ENCODE measurements at regions of chr6 and their contacts with region 1.

Region 1: GRCh38 chr6:126657561-126658175 is 317.8 kb downstream of the CENPW start:
- DNase-seq: peak; percentile 56
- H3K4me3 ChIP-seq: no peak overlapping the region
- H3K27ac ChIP-seq: no peak overlapping the region
- H3K4me1 ChIP-seq: no peaks in the 10 kb centered on the region
- H3K27me3 ChIP-seq: no peaks in the 10 kb centered on the region
- CTCF ChIP-seq: peak; percentile 36 to 41
- POLR2A ChIP-seq: no peak

Region 2: GRCh38 chr6:125995972-125996580 is 661.6 kb before region 1 on chr6:
- CTCF ChIA-PET with region 1: interaction called, 15 read pairs
- POLR2A ChIA-PET with region 1: no interaction called
- dilution Hi-C with region 1: no loop called
- intact Hi-C with region 1: loop called (anchors 1 kb)
- DNase-seq: peak; percentile 74
- H3K4me3 ChIP-seq: no peak overlapping the region
- H3K27ac ChIP-seq: no peak overlapping the region
- H3K4me1 ChIP-seq: no peaks in the 10 kb centered on the region
- H3K27me3 ChIP-seq: no peaks in the 10 kb centered on the region
- CTCF ChIP-seq: peak; percentile 84 to 97
- POLR2A ChIP-seq: no peak

Region 3: DNA sequence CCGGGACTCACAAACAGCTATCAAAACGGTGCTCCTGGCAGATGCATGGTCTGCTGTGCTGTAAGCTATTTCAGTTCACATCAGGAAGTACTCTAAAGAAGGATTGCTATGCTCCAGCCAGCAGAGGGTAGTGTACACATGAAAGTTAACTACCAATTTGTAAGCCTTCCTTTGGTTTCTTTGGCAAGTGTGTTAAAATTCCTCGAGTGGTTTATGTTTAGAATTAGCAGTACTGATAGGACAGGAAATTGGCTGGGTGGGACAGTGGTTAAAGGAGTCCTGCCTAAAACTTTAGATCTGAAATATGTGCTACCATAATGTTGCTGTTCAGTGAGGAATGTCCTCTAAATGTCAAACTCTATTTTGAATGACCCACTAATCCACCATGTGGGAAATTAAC is 624.0 kb before region 1 on chr6:
- CTCF ChIA-PET with region 1: interaction called, 24 read pairs
- POLR2A ChIA-PET with region 1: no interaction called
- dilution Hi-C with region 1: no loop called
- intact Hi-C with region 1: loop called (anchors 1 kb)
- DNase-seq: peak; percentile 78
- H3K4me3 ChIP-seq: no peak overlapping the region
- H3K27ac ChIP-seq: no peak overlapping the region
- H3K4me1 ChIP-seq: no peaks in the 10 kb centered on the region
- H3K27me3 ChIP-seq: no peaks in the 10 kb centered on the region
- CTCF ChIP-seq: peak; percentile 56 to 65
- POLR2A ChIP-seq: no peak

Region 4: DNA sequence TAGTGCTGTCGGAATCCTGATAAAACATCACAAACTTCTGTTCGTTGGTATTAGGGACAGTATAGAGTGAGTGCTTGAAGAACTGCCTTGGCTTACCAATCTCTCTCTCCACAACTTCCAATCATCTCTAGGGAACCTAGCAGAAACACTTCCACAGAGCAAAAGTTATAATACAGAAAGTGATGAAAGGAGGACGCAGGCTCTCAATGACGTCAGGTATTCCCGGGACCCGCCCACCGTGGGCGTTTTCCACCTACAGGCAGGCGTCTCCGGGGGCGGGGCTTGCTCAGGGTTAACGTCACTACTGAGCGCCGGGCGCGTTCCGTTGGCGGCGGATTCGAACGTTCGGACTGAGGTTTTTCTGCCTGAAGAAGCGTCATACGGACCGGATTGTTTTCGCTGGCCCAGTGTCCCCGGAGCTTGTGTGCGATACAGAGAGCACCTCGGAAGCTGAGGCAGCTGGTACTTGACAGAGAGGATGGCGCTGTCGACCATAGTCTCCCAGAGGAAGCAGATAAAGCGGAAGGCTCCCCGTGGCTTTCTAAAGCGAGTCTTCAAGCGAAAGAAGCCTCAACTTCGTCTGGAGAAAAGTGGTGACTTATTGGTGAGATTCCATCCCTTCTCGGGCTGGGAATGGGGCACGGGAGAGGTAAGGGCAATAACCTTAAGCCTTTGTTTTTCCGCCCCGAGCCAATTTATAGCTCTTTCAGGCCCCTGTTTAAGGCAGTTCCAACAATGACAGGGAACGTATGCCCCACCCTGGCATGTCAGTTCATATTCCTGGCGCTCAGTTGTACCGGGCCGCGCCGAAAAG is 317.7 kb before region 1 on chr6 and contains the start of gene CENPW:
- CTCF ChIA-PET with region 1: no interaction called
- POLR2A ChIA-PET with region 1: no interaction called
- dilution Hi-C with region 1: no loop called
- intact Hi-C with region 1: loop called (anchors 1 kb)
- DNase-seq: peak; percentile 92
- H3K4me3 ChIP-seq: peak within 1 kb of the TSS; percentile 62 to 99 (median 98)
- H3K27ac ChIP-seq: peak within 1 kb of the TSS; percentile 61
- H3K4me1 ChIP-seq: peaks cover 15% of the 10 kb centered on the region
- H3K27me3 ChIP-seq: peaks cover 0 to 2% of the 10 kb centered on the region in 2 experiments
- CTCF ChIP-seq: no peak
- POLR2A ChIP-seq: peak; percentile 56
- total RNA-seq, gene CENPW: 82.7 and 85.8 TPM in 2 replicates

Region 5: DNA sequence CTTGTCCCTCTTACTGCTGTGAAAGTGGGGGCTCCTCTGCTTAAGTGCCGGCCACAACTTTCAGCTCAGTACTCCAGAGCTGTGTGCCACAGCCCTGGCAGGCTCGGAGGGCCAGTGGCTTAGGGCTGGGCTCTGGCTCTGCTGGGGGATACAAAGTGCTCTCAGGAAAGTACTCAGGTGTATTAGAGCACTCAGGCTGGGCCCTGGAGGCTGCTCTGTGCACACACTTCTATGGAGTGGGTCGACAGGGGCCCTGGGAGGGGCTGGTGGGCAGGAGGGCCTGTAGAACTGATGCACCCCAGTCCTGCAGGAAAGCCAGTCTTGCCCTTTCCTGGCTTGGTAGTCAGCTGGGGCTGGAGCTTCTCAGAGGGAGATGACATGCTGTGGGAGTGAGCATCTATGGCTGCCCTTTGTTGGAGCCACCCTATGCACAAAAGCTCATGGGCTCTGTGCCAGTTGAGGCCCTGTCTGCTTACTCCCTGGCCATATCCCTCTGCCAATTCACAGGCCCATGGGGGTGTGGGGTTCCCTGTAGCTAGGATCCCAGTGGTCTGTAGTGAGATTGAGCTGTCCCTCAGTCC is 295.7 kb before region 1 on chr6:
- CTCF ChIA-PET with region 1: interaction called, 29 read pairs
- POLR2A ChIA-PET with region 1: no interaction called
- dilution Hi-C with region 1: no loop called
- intact Hi-C with region 1: loop called (anchors 2 kb)
- DNase-seq: no peak
- H3K4me3 ChIP-seq: no peak overlapping the region
- H3K27ac ChIP-seq: no peak overlapping the region
- H3K4me1 ChIP-seq: peaks cover 5% of the 10 kb centered on the region
- H3K27me3 ChIP-seq: no peaks in the 10 kb centered on the region
- CTCF ChIP-seq: no peak
- POLR2A ChIP-seq: no peak

Region 6: GRCh38 chr6:126372626-126373025 is 285.0 kb before region 1 on chr6:
- CTCF ChIA-PET with region 1: no interaction called
- POLR2A ChIA-PET with region 1: no interaction called
- dilution Hi-C with region 1: no loop called
- intact Hi-C with region 1: no loop called
- DNase-seq: no peak
- H3K4me3 ChIP-seq: no peak overlapping the region
- H3K27ac ChIP-seq: no peak overlapping the region
- H3K4me1 ChIP-seq: peaks cover 7% of the 10 kb centered on the region
- H3K27me3 ChIP-seq: no peaks in the 10 kb centered on the region
- CTCF ChIP-seq: no peak
- POLR2A ChIP-seq: no peak

Region 7: DNA sequence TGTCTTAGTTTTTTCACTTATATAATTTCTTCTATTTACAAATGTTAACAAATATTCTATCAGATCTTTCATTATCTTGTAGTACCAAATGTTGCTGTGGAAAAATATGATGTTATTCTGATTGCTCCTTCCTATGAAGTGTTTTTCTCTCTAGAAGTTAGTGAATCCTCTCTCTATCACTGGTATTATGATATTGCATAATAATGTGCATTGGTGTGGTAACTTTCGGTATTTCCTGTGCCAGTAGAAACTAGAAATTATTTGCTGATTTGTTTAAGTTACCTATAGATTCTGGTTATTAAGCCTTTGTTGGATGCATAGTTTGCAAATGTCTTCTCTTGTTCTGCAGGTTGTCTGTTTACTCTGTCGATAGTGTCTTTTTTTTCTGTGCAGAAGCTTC is 24.8 kb after region 1 on chr6:
- CTCF ChIA-PET with region 1: no interaction called
- POLR2A ChIA-PET with region 1: no interaction called
- dilution Hi-C with region 1: no loop called
- intact Hi-C with region 1: no loop called
- DNase-seq: no peak
- H3K4me3 ChIP-seq: no peak overlapping the region
- H3K27ac ChIP-seq: no peak overlapping the region
- H3K4me1 ChIP-seq: no peaks in the 10 kb centered on the region
- H3K27me3 ChIP-seq: no peaks in the 10 kb centered on the region
- CTCF ChIP-seq: no peak
- POLR2A ChIP-seq: no peak

Measured in endothelial cell of umbilical vein (primary cell).